Calu3 (cell line): ENCODE measurements at regions of chr14 and their contacts with region 1.

Region 1: GRCh38 chr14:83071888-83072501 is 1538.3 kb upstream of the SEL1L start:
- DNase-seq: peak; percentile 1
- H3K4me3 Mint-ChIP-seq: no peak overlapping the region
- H3K27ac Mint-ChIP-seq: no peak overlapping the region
- H3K4me1 Mint-ChIP-seq: no peaks in the 10 kb centered on the region
- H3K27me3 Mint-ChIP-seq: no peaks in the 10 kb centered on the region
- CTCF ChIP-seq: peak; percentile 22

Region 2: DNA sequence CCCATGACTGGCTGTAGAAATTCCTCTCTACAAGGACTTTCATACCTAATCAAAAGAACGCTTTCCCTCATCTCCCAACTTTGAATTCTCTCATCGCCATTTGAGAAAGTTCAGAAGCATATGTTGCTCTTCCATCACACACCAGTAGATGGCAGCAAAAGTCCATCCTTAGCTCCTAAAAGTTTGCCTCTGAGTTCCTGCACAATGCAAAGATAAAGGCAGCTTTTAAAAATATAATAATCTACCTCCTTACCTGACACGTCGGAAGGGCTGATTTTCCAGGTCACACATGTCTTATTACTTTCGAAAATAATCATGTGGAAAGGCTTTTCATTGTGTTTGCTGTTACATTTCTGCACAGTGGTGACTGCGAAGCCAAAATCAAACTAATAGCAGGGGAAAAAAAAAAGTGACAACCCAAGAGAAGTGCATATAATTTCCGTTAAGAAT is 1081.7 kb before region 1 on chr14:
- CTCF ChIA-PET with region 1: no interaction called
- intact Hi-C with region 1: loop called (anchors 10 kb)
- DNase-seq: peak; percentile 51
- H3K4me3 Mint-ChIP-seq: no peak overlapping the region
- H3K27ac Mint-ChIP-seq: no peak overlapping the region
- H3K4me1 Mint-ChIP-seq: no peaks in the 10 kb centered on the region
- H3K27me3 Mint-ChIP-seq: no peaks in the 10 kb centered on the region
- CTCF ChIP-seq: peak; percentile 51

Region 3: GRCh38 chr14:83085136-83085535 is 13.1 kb after region 1 on chr14:
- CTCF ChIA-PET with region 1: no interaction called
- intact Hi-C with region 1: no loop called
- DNase-seq: no peak
- H3K4me3 Mint-ChIP-seq: no peak overlapping the region
- H3K27ac Mint-ChIP-seq: no peak overlapping the region
- H3K4me1 Mint-ChIP-seq: no peaks in the 10 kb centered on the region
- H3K27me3 Mint-ChIP-seq: no peaks in the 10 kb centered on the region
- CTCF ChIP-seq: no peak